CD4-positive, alpha-beta T cell (primary cell): ENCODE measurements at regions of chrX and their contacts with region 1.

Region 1: GRCh38 chrX:69285881-69286564 is 120.8 kb upstream of the PJA1 start:
- DNase-seq: peak; percentile 31 to 69 (median 51)
- ATAC-seq: peak; percentile 55
- H3K4me3 ChIP-seq: peak overlapping the region; percentile 42
- H3K4me3 Mint-ChIP-seq: no peak overlapping the region
- H3K27ac ChIP-seq: no peak overlapping the region
- H3K27ac Mint-ChIP-seq: no peak overlapping the region
- H3K4me1 ChIP-seq: peaks cover 10% of the 10 kb centered on the region
- H3K4me1 Mint-ChIP-seq: no peaks in the 10 kb centered on the region
- H3K27me3 ChIP-seq: no peaks in the 10 kb centered on the region
- H3K27me3 Mint-ChIP-seq: no peaks in the 10 kb centered on the region
- CTCF ChIP-seq: peak; percentile 57

Region 2: DNA sequence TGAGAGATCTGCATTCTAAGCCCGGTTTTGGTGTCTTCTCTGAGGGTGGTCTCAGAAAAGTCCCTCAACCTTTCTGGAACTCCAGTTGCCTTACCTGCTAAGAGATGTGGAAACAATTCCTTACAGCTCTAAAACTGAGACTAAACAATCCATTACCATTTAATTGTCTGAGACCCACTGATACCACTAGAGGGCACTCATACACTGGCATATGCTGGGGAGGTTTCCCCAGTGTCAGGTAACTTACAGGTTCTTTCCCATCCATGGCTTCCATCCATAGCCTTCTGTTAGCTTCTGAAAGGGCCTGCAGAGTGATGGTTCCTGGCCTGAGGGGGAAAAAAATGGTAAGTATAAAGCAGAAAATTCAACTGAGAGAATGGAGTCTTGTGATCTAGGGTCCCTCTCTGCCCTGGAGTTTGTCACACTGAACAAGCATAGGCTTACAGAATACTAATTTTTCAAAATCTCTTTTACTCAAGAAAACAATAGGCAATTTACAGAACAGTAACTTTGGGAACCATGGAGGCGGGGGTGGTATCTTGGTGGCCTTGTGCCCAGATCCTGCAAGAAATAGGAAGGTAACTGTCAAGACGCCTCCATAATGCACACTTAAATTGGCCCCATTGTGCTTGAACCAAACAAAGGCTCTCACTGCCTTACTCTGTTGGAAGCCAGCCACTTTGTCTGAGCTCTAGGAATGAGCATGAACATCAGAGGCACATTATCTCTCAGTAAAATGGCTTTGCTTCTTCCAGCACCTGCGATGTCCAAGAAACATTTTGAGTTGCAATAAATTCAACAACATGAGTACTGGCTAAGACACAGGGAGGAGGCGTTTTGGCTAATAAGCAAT is 1088.9 kb before region 1 on chrX:
- CTCF ChIA-PET with region 1: no interaction called
- POLR2A ChIA-PET with region 1: no interaction called
- intact Hi-C with region 1: loop called (anchors 5 to 10 kb)
- DNase-seq: peak in 5 of 14 experiments; percentile 1 to 41 (median 35)
- ATAC-seq: no peak
- H3K4me3 ChIP-seq: no peak overlapping the region
- H3K4me3 Mint-ChIP-seq: no peak overlapping the region
- H3K27ac ChIP-seq: no peak overlapping the region
- H3K27ac Mint-ChIP-seq: no peak overlapping the region
- H3K4me1 ChIP-seq: no peaks in the 10 kb centered on the region
- H3K4me1 Mint-ChIP-seq: no peaks in the 10 kb centered on the region
- H3K27me3 ChIP-seq: no peaks in the 10 kb centered on the region
- H3K27me3 Mint-ChIP-seq: no peaks in the 10 kb centered on the region
- CTCF ChIP-seq: peak; percentile 37

Region 3: DNA sequence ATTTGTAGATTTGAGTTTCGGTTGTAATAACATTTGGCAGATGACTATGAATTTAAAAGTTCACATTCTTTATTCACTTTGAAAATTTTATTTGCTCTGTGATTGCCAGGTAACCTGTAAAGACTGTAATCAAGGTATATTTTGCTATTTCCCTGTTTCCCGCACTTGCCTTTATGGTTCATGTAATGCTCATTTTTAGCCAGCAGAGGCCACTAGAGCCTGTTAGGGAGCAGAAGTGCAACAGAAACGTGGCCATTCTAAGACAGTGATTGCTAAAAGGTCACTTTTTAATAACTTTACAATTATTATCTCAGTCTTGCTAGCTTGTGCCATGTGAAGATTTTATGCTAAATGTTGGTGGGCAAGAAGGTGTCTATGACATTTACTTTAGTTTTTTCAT is 774.8 kb before region 1 on chrX:
- CTCF ChIA-PET with region 1: no interaction called
- POLR2A ChIA-PET with region 1: no interaction called
- intact Hi-C with region 1: loop called in 1 of 2 experiments (anchors 5 kb)
- DNase-seq: peak in 6 of 14 experiments; percentile 5 to 62 (median 44)
- ATAC-seq: peak; percentile 38
- H3K4me3 ChIP-seq: no peak overlapping the region
- H3K4me3 Mint-ChIP-seq: no peak overlapping the region
- H3K27ac ChIP-seq: no peak overlapping the region
- H3K27ac Mint-ChIP-seq: peak overlapping the region; percentile 4
- H3K4me1 ChIP-seq: peaks cover 9% of the 10 kb centered on the region
- H3K4me1 Mint-ChIP-seq: peaks cover 29% of the 10 kb centered on the region
- H3K27me3 ChIP-seq: no peaks in the 10 kb centered on the region
- H3K27me3 Mint-ChIP-seq: no peaks in the 10 kb centered on the region
- CTCF ChIP-seq: peak; percentile 71

Region 4: GRCh38 chrX:68732906-68733493 is 553.0 kb before region 1 on chrX:
- CTCF ChIA-PET with region 1: no interaction called
- POLR2A ChIA-PET with region 1: no interaction called
- intact Hi-C with region 1: loop called in 1 of 2 experiments (anchors 2 kb)
- DNase-seq: peak; percentile 24 to 70 (median 52)
- ATAC-seq: peak; percentile 37
- H3K4me3 ChIP-seq: no peak overlapping the region
- H3K4me3 Mint-ChIP-seq: no peak overlapping the region
- H3K27ac ChIP-seq: no peak overlapping the region
- H3K27ac Mint-ChIP-seq: no peak overlapping the region
- H3K4me1 ChIP-seq: no peaks in the 10 kb centered on the region
- H3K4me1 Mint-ChIP-seq: no peaks in the 10 kb centered on the region
- H3K27me3 ChIP-seq: peaks cover 0 to 6% of the 10 kb centered on the region in 2 experiments
- H3K27me3 Mint-ChIP-seq: peaks cover 22% of the 10 kb centered on the region
- CTCF ChIP-seq: peak; percentile 41

Region 5: GRCh38 chrX:68828740-68829552 is 457.1 kb before region 1 on chrX and contains the start of gene EFNB1:
- CTCF ChIA-PET with region 1: no interaction called
- POLR2A ChIA-PET with region 1: interaction called, 3 read pairs
- intact Hi-C with region 1: loop called in 1 of 2 experiments (anchors 1 kb)
- DNase-seq: peak; percentile 70 to 94 (median 82)
- ATAC-seq: peak; percentile 94
- H3K4me3 ChIP-seq: peak within 1 kb of the TSS; percentile 80
- H3K4me3 Mint-ChIP-seq: peak within 1 kb of the TSS; percentile 94
- H3K27ac ChIP-seq: no peak within 1 kb of the TSS
- H3K27ac Mint-ChIP-seq: peak within 1 kb of the TSS; percentile 63
- H3K4me1 ChIP-seq: peaks cover 35% of the 10 kb centered on the region
- H3K4me1 Mint-ChIP-seq: peaks cover 23% of the 10 kb centered on the region
- H3K27me3 ChIP-seq: peaks cover 0 to 2% of the 10 kb centered on the region in 2 experiments
- H3K27me3 Mint-ChIP-seq: no peaks in the 10 kb centered on the region
- CTCF ChIP-seq: no peak
- total RNA-seq, gene EFNB1: 2.9 to 3.1 TPM

Region 6: DNA sequence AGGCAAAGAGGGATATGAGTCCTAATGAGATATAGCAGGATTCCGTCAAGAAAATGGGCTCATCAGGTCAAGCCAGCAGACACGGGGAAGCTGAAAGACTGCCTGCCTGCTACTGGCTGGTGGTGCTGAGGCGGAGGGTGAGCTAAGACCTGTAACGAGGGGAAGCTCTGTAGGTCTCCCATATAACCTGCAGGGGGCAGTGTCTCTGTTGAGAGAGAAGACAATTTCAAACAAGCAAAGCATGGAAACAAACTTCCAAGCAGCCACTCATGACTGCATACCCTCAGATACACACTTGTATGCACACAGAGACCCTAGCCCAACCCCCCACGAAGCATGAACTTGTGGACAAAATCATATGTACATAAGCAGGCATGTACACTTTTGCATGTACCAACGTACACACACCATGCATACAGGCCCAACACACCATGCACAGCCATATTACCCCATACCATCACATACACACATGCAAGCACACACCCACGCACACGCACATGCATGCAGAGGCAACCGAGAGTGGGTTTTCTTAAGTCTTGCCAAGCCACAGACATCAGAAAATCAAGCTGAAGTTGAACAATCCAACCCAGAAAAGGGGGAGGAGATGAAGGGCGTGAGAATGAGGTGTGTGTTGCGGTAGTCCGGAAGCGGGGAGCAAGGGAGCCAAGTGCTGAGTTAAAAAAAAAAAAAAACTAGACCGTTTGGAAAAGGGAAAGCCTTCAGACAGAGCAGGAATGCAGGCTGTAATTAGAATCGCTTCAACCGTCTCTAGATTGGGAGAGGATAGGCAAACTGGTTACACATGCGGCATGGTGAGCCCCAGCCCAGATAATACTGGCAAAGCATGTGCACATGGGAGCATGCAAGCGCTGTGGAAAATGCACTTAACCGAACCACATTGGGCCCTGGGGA is 191.8 kb before region 1 on chrX:
- CTCF ChIA-PET with region 1: no interaction called
- POLR2A ChIA-PET with region 1: no interaction called
- intact Hi-C with region 1: loop called in 1 of 2 experiments (anchors 10 kb)
- DNase-seq: peak in 8 of 14 experiments; percentile 3 to 48 (median 18)
- ATAC-seq: no peak
- H3K4me3 ChIP-seq: no peak overlapping the region
- H3K4me3 Mint-ChIP-seq: no peak overlapping the region
- H3K27ac ChIP-seq: no peak overlapping the region
- H3K27ac Mint-ChIP-seq: no peak overlapping the region
- H3K4me1 ChIP-seq: no peaks in the 10 kb centered on the region
- H3K4me1 Mint-ChIP-seq: no peaks in the 10 kb centered on the region
- H3K27me3 ChIP-seq: no peaks in the 10 kb centered on the region
- H3K27me3 Mint-ChIP-seq: no peaks in the 10 kb centered on the region
- CTCF ChIP-seq: peak; percentile 36

Region 7: GRCh38 chrX:69158166-69158980 is 127.7 kb before region 1 on chrX:
- CTCF ChIA-PET with region 1: no interaction called
- POLR2A ChIA-PET with region 1: no interaction called
- intact Hi-C with region 1: loop called in 1 of 2 experiments (anchors 10 kb)
- DNase-seq: peak in 10 of 14 experiments; percentile 2 to 61 (median 20)
- ATAC-seq: peak; percentile 59
- H3K4me3 ChIP-seq: no peak overlapping the region
- H3K4me3 Mint-ChIP-seq: no peak overlapping the region
- H3K27ac ChIP-seq: no peak overlapping the region
- H3K27ac Mint-ChIP-seq: peak overlapping the region; percentile 56
- H3K4me1 ChIP-seq: peaks cover 10% of the 10 kb centered on the region
- H3K4me1 Mint-ChIP-seq: peaks cover 34% of the 10 kb centered on the region
- H3K27me3 ChIP-seq: no peaks in the 10 kb centered on the region
- H3K27me3 Mint-ChIP-seq: no peaks in the 10 kb centered on the region
- CTCF ChIP-seq: peak; percentile 14

Region 8: GRCh38 chrX:69222103-69223090 is 63.6 kb before region 1 on chrX:
- CTCF ChIA-PET with region 1: no interaction called
- POLR2A ChIA-PET with region 1: no interaction called
- intact Hi-C with region 1: no loop called
- DNase-seq: peak; percentile 59 to 81 (median 71)
- ATAC-seq: peak; percentile 84
- H3K4me3 ChIP-seq: no peak overlapping the region
- H3K4me3 Mint-ChIP-seq: no peak overlapping the region
- H3K27ac ChIP-seq: no peak overlapping the region
- H3K27ac Mint-ChIP-seq: no peak overlapping the region
- H3K4me1 ChIP-seq: peaks cover 6% of the 10 kb centered on the region
- H3K4me1 Mint-ChIP-seq: no peaks in the 10 kb centered on the region
- H3K27me3 ChIP-seq: no peaks in the 10 kb centered on the region
- H3K27me3 Mint-ChIP-seq: no peaks in the 10 kb centered on the region
- CTCF ChIP-seq: peak; percentile 65

Region 9: DNA sequence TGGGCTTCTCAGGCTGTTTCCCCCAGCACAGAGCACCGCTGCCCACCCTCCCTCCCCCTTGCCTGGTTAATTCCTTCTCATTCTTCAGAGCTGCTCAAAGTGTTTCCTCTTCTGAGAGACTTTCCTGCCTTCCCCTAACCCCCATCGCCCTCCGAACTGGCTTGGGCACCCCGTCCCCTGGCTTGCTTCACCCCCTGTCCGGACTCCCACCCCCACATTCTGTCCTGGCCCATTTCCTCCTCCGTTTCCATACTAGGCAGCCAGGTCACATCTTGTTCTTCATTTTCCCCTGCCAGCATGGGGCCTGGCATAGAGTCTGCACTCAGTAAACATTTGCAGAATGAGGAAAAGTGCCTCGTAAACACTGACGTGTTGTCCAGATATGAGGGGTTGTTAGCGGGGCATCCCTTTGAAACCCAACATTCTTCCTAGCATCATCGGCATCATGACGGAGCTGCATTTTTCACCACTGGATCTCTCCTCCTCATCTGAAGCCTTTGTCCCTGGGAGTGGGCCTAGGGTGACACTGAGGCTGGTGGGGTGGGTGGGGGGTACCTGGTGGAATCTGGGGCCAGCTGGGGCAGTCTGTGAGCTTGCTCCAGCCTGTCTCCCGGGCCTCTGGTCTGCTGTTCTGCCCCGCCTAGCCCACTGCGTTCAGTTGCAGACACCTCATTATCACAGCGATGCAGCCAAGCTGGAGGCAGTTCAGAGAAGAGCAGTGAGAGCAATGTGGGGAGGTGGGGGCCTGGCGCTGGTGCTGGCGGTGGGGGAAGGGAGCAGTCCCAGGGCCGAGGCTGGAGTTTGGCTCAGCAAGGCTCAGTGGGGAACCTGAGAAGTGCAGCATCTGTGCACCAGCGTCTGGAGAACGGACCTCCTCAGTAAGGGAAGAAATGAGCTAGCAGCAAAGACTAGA is 28.7 kb after region 1 on chrX:
- CTCF ChIA-PET with region 1: no interaction called
- POLR2A ChIA-PET with region 1: no interaction called
- intact Hi-C with region 1: no loop called
- DNase-seq: no peak
- ATAC-seq: no peak
- H3K4me3 ChIP-seq: no peak overlapping the region
- H3K4me3 Mint-ChIP-seq: no peak overlapping the region
- H3K27ac ChIP-seq: no peak overlapping the region
- H3K27ac Mint-ChIP-seq: no peak overlapping the region
- H3K4me1 ChIP-seq: no peaks in the 10 kb centered on the region
- H3K4me1 Mint-ChIP-seq: no peaks in the 10 kb centered on the region
- H3K27me3 ChIP-seq: no peaks in the 10 kb centered on the region
- H3K27me3 Mint-ChIP-seq: no peaks in the 10 kb centered on the region
- CTCF ChIP-seq: no peak